ENCODE measurements at regions of chr1 and their contacts with region 1.

Region 1: GRCh38 chr1:8987881-8988617 is 38.2 kb downstream of the SLC2A7 start:
- DNase-seq: peak; percentile 55 to 96 (median 78)

Region 2: GRCh38 chr1:8858888-8859706 is 129.0 kb before region 1 on chr1:
- intact Hi-C with region 1: loop called (anchors 5 kb)
- DNase-seq: peak in 6 of 10 donors; percentile 39 to 87 (median 52)

Region 3: GRCh38 chr1:8962812-8963530 is 25.1 kb before region 1 on chr1:
- intact Hi-C with region 1: no loop called
- DNase-seq: peak in 2 of 10 donors; percentile 19 to 26

Region 4: GRCh38 chr1:9044241-9044640 is 56.2 kb after region 1 on chr1:
- intact Hi-C with region 1: no loop called
- DNase-seq: no peak